ENCODE measurements at regions of chr3 and their contacts with region 1.

Region 1: GRCh38 chr3:15268033-15268631 is 62.1 kb downstream of the CAPN7 start:
- DNase-seq: peak; percentile 74 to 94 (median 90)
- ATAC-seq: peak; percentile 90
- H3K4me3 ChIP-seq: no peak overlapping the region
- H3K27ac ChIP-seq: peak overlapping the region in 1 of 2 donors; percentile 81
- H3K4me1 ChIP-seq: peaks cover 12 to 69% of the 10 kb centered on the region in 2 donors
- H3K27me3 ChIP-seq: no peaks in the 10 kb centered on the region
- CTCF ChIP-seq: peak; percentile 86 to 91

Region 2: GRCh38 chr3:15332405-15333098 is 64.4 kb after region 1 on chr3 and contains the start of gene SH3BP5:
- intact Hi-C with region 1: loop called in 1 of 2 experiments (anchors 5 kb)
- DNase-seq: peak; percentile 71 to 97 (median 82)
- ATAC-seq: peak; percentile 95
- H3K4me3 ChIP-seq: peak within 1 kb of the TSS; percentile 85 to 88
- H3K27ac ChIP-seq: peak within 1 kb of the TSS; percentile 78 to 87
- H3K4me1 ChIP-seq: peaks cover 9 to 57% of the 10 kb centered on the region in 2 donors
- H3K27me3 ChIP-seq: no peaks in the 10 kb centered on the region
- CTCF ChIP-seq: peak; percentile 69 to 82
- polyA plus RNA-seq, gene SH3BP5: 57.0 to 65.5 (median 60.9) TPM

Region 3: DNA sequence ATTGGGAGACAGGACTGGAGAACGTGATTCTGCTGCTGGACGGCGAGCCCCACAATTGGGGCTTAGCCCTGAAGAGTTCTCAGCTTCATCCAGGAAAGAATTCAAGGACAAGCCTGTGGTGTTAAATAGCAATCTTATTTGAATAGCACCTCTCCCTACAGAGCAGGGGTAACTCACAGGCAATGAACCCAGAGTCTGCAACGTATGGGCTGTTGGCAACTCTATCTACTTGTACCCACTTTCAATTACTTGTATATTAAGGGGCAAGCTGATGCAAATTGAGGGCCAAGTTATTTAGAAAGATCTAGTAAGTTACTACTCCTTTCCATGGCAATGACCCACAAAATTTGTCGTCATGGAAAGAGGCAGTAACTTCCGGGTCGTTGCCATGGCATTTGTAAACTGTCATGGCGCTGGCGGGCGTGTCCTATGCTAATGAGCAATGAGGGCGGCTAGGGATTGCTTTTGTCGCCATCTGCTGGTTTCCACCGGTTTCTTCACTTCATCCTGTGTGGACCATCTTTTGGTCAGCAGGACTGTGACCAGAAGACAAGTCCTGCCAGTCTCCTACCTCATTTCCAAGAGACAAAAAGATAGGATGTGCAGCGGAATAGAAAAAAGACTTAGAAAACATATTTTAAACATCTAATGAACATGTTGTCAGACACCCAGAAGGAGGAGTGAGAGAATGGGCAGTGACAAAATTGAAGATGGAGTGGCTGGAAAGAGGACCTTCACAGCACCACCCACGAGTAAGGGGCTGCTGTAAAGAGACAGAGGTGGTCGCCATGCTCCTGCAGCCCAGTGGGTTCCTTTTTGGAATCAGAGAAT is 110.0 kb after region 1 on chr3:
- intact Hi-C with region 1: loop called (anchors 5 to 10 kb)
- DNase-seq: peak; percentile 80 to 94 (median 92)
- ATAC-seq: peak; percentile 100
- H3K4me3 ChIP-seq: no peak overlapping the region
- H3K27ac ChIP-seq: peak overlapping the region; percentile 72 to 75
- H3K4me1 ChIP-seq: peaks cover 0 to 6% of the 10 kb centered on the region in 2 donors
- H3K27me3 ChIP-seq: no peaks in the 10 kb centered on the region
- CTCF ChIP-seq: peak; percentile 75 to 87

Region 4: DNA sequence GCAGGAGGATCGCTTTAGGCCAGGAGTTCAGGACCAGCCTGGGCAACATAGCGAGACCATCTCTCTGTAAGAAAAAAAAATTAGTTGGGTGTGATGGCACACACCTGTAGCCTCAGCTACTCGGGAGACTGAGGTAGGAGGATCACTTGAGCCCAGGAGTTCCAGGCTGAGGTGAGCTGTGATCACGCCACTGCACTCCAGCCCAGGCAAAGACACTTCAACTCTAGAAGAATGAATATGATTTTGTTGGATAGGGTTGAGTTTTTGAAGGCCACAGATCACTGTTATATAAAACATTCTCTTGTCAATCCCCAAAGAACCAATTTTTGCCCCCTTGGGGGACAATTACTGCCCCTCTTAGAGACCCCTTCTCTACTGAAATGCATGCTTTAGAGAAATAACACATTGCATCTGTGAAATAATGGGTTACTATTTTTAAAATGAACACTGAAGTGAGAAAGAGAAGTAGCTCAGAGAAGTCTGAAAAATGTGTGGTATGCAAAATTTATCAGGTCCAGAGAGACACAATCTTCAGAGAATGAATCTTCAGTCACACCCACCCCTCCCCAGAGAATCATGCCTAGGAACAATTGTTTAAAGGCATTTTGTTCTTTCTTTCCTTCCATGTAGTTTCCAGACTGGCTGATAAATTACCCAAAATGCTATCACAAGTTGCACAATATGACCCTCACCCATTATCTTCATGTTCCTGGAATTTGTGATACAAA is 116.5 kb after region 1 on chr3:
- intact Hi-C with region 1: loop called (anchors 5 to 10 kb)
- DNase-seq: no peak
- ATAC-seq: no peak
- H3K4me3 ChIP-seq: no peak overlapping the region
- H3K27ac ChIP-seq: no peak overlapping the region
- H3K4me1 ChIP-seq: peaks cover 0 to 6% of the 10 kb centered on the region in 2 donors
- H3K27me3 ChIP-seq: no peaks in the 10 kb centered on the region
- CTCF ChIP-seq: no peak

Region 5: GRCh38 chr3:15535732-15536131 is 267.6 kb after region 1 on chr3:
- intact Hi-C with region 1: no loop called
- DNase-seq: no peak
- ATAC-seq: peak; percentile 76
- H3K4me3 ChIP-seq: no peak overlapping the region
- H3K27ac ChIP-seq: no peak overlapping the region
- H3K4me1 ChIP-seq: no peaks in the 10 kb centered on the region
- H3K27me3 ChIP-seq: no peaks in the 10 kb centered on the region
- CTCF ChIP-seq: no peak